A549 (cell line): ENCODE measurements at regions of chrX and their contacts with region 1.

Region 1: DNA sequence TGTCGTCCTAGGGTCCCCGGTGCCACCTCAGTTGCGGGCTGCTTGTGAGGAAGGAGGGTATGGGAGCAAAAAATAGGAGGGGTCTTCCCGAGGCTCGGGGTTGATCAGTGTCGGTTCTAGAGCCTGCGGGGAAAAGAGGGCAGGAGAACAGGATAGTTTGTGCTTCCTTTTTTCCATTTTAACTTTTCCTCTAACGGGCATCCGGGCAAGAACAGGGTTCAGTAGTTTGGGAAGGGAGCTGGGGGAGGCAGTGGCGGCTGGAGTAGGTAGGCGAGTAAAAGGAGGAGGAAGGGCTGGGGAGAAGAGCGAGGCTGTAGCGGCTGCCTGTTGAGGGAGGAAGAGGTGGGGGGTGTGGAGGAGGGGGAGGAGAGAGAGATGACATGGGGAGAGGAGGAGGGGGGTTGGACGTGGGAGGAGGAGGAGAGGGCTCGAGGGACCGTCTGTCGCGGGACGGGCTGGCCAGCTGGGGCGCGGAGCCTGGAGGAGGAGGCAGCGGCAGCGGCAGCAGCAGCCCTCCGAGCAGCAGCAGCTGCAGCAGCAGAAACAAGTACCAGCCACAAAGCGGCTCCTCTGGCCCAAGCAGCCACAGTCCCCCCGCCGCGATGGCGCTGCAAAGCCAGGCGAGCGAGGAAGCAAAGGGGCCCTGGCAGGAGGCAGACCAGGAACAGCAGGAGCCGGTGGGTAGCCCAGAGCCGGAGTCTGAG is at the start of gene SLC16A2:
- DNase-seq: peak; percentile 72 to 80
- ATAC-seq: peak; percentile 78 to 80
- H3K4me3 ChIP-seq: peak within 1 kb of the TSS; percentile 70
- H3K27ac ChIP-seq: peak within 1 kb of the TSS; percentile 93 to 94
- H3K4me1 ChIP-seq: peaks cover 11% of the 10 kb centered on the region; the same call in 2 of the 3 replicates
- CTCF ChIP-seq: no peak
- EP300 ChIP-seq: no peak
- POLR2A ChIP-seq: peak; percentile 60
- RAD21 ChIP-seq: no peak
- polyA plus RNA-seq, gene SLC16A2: 9.7 and 11.7 TPM in 2 replicates

Region 2: DNA sequence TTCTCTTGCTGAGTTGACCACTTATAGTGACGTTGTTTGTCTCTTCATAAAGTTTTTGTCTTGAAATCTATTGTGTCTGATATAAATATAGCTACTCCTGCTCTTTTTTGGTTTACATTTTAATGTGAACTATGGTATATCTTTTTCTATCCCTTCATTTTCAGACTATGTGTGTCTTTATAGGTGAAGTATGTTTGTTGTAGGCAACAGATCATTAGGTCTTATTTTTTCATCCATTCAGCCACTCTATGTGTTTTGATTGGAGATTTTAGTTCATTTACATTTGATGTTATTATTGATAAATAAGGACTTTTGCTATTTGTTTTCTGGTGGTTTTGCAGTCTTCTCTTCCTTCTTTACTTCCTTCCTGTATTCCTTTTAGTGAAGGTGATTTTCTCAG is 43.9 kb before region 1 on chrX:
- CTCF ChIA-PET with region 1: no interaction called
- POLR2A ChIA-PET with region 1: no interaction called
- DNase-seq: no peak
- ATAC-seq: no peak
- H3K4me3 ChIP-seq: no peak overlapping the region
- H3K27ac ChIP-seq: no peak overlapping the region
- H3K4me1 ChIP-seq: peaks cover 4% of the 10 kb centered on the region; the same call in 1 of the 3 replicates
- CTCF ChIP-seq: no peak
- EP300 ChIP-seq: no peak
- POLR2A ChIP-seq: no peak
- RAD21 ChIP-seq: no peak

Region 3: GRCh38 chrX:74450803-74451449 is 29.7 kb after region 1 on chrX:
- CTCF ChIA-PET with region 1: interaction called, 8 read pairs
- POLR2A ChIA-PET with region 1: interaction called, 10 read pairs
- DNase-seq: peak; percentile 29 to 64
- ATAC-seq: peak; percentile 89 to 90
- H3K4me3 ChIP-seq: no peak overlapping the region
- H3K27ac ChIP-seq: peak overlapping the region; percentile 62 to 87
- H3K4me1 ChIP-seq: peaks cover 34% of the 10 kb centered on the region
- CTCF ChIP-seq: no peak
- EP300 ChIP-seq: peak in 1 of 2 experiments; percentile 47; a peak in 2 of 5 replicates
- POLR2A ChIP-seq: no peak
- RAD21 ChIP-seq: no peak